Gastrocnemius medialis (tissue), 4 donors: ENCODE measurements at regions of chr16 and their contacts with region 1.

Region 1: DNA sequence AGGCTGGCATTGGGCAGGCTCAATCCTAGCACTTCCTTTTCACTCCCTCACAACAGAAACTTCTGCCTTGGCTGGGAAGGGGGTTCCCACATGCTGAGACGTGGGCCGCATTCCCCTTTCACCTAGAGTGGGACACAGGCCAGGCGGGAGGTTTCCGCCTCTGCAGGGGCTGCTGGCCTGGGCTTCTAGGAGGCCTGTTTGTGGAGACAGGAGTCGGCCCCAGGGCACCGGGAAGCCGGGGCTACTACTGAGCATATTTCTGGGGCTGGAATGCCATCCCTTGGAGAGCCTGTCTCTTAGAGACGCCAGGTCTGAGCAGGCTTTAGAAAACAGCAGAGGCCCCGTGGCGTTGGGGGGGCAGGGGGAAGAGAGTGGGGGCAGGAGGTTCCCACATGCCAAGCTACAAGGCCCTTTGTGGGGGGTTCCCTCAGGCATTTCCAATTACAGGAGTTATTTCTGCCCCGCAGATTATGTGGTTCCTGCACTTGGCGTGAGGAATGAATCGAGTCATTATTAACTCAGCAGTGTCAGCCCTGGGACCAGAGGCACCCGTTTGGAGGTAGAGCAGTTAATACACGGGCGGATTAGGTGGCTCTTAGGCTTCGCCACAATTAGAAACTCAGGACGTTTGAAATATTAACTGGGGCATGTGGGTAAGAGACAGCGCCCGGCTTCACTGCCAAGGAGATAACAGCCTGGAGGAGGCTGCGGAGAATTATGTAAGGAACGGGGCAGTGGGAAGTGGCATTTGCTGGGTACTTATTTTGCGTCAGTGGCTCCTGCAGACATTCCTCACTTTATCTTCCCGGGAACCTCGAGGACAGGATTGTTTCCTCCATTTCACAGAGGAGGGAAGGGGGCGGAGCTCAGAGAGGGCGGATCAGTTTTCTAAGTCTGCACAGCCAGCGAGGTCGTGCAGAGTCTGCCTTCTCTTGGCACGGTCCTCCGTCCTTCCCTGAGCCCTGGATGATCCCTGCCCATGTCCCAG is 162.5 kb downstream of the MAF start:
- DNase-seq: peak; percentile 30 to 75
- ATAC-seq: peak; percentile 87 to 96
- H3K4me3 ChIP-seq: peak overlapping the region; percentile 26 to 43 (median 36)
- H3K27ac ChIP-seq: peak overlapping the region; percentile 76 to 87 (median 82)
- H3K4me1 ChIP-seq: peaks cover 11 to 25% of the 10 kb centered on the region in 2 donors
- H3K27me3 ChIP-seq: no peaks in the 10 kb centered on the region
- CTCF ChIP-seq: no peak
- POLR2A ChIP-seq: no peak

Region 2: GRCh38 chr16:79362300-79362970 is 75.6 kb before region 1 on chr16:
- in situ Hi-C with region 1: no loop called
- intact Hi-C with region 1: loop called (anchors 5 kb)
- DNase-seq: no peak
- ATAC-seq: peak; percentile 61 to 78
- H3K4me3 ChIP-seq: peak overlapping the region in 3 of 4 donors; percentile 19 to 28 (median 26)
- H3K27ac ChIP-seq: peak overlapping the region; percentile 75 to 81 (median 80)
- H3K4me1 ChIP-seq: peaks cover 26 to 35% of the 10 kb centered on the region in 2 donors
- H3K27me3 ChIP-seq: no peaks in the 10 kb centered on the region
- CTCF ChIP-seq: no peak
- POLR2A ChIP-seq: no peak

Region 3: DNA sequence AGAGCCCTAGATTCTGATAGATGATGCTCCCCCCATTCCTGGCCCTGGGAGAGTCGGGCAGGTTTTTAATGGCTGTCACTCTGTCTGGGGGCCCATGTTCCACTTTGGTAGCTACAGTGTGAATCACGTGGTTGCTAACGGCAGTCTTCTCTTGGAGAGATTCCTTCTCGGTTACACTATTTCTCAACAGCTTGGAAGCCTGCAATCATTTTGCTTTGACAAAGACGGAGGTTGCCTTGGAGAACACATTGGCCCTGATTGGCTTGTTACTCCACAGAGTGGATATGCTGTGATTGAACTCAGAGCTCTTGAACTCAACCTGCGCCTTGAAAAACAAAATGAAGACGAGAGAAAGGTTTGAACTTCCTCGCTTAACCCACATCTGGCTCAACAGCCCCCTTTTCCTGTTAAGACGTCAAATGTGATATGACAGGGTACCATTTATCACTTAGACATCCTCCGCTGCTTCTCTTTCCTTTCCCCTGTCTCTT is 56.5 kb before region 1 on chr16:
- in situ Hi-C with region 1: no loop called
- intact Hi-C with region 1: loop called (anchors 5 kb)
- DNase-seq: peak; percentile 23 to 36
- ATAC-seq: peak; percentile 95 to 97
- H3K4me3 ChIP-seq: no peak overlapping the region
- H3K27ac ChIP-seq: peak overlapping the region in 3 of 4 donors; percentile 19 to 49 (median 33)
- H3K4me1 ChIP-seq: peaks cover 0 to 8% of the 10 kb centered on the region in 2 donors
- H3K27me3 ChIP-seq: no peaks in the 10 kb centered on the region
- CTCF ChIP-seq: no peak
- POLR2A ChIP-seq: no peak

Region 4: DNA sequence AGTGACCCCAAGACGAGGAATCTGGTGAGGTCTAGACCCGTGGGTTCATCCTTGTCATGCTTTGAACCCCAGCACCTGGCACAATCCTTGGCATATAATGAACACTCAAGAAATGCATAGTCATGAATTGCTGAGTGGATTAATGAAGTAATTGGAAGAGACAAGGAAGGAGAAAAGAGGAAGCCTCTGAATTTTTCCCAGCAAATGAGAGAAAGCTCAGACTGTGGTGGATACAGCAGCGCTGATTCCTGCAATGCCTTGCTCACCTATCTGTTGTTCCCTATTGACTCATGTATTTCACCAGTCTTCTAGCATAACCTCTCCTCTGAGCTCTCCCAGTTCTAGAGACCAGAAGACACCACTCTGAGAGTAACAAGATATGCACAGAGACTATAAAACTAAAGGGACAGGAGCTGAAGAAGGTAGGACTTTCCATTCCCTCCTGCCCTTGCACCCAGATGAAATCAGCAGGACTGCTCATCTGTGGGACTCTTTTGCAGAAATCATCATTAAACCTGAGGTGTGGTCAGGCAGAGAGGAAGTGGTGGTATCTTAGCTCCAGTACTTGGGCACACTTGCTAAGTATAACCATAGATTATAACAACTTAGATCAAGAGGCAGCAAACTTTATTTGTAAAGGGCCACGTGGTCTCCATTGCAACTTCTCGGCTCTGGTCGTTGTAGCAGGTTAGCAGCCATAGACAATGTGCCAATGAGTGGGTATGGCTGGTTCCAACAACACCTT is 59.7 kb after region 1 on chr16:
- in situ Hi-C with region 1: no loop called
- intact Hi-C with region 1: no loop called
- DNase-seq: no peak
- ATAC-seq: no peak
- H3K4me3 ChIP-seq: no peak overlapping the region
- H3K27ac ChIP-seq: no peak overlapping the region
- H3K4me1 ChIP-seq: no peaks in the 10 kb centered on the region
- H3K27me3 ChIP-seq: no peaks in the 10 kb centered on the region
- CTCF ChIP-seq: no peak
- POLR2A ChIP-seq: no peak

Region 5: GRCh38 chr16:79593074-79593531 is 155.0 kb after region 1 on chr16:
- in situ Hi-C with region 1: no loop called
- intact Hi-C with region 1: loop called (anchors 5 kb)
- DNase-seq: peak in 1 of 2 donors; percentile 47
- ATAC-seq: peak; percentile 46 to 49
- H3K4me3 ChIP-seq: peak overlapping the region; percentile 62 to 85 (median 72)
- H3K27ac ChIP-seq: peak overlapping the region; percentile 89 to 95 (median 92)
- H3K4me1 ChIP-seq: peaks cover 38 to 47% of the 10 kb centered on the region in 2 donors
- H3K27me3 ChIP-seq: no peaks in the 10 kb centered on the region
- CTCF ChIP-seq: no peak
- POLR2A ChIP-seq: peak in 1 of 2 donors; percentile 24